Endothelial cell of umbilical vein (primary cell): ENCODE measurements at regions of chr17 and their contacts with region 1.

Region 1: GRCh38 chr17:76432712-76433336 is 20.1 kb downstream of the UBE2O start:
- DNase-seq: no peak
- H3K4me3 ChIP-seq: no peak overlapping the region
- H3K27ac ChIP-seq: no peak overlapping the region
- H3K4me1 ChIP-seq: peaks cover 9% of the 10 kb centered on the region
- H3K27me3 ChIP-seq: no peaks in the 10 kb centered on the region
- CTCF ChIP-seq: peak; percentile 22 to 54
- POLR2A ChIP-seq: no peak

Region 2: GRCh38 chr17:75738218-75738802 is 694.5 kb before region 1 on chr17:
- CTCF ChIA-PET with region 1: no interaction called
- POLR2A ChIA-PET with region 1: no interaction called
- dilution Hi-C with region 1: no loop called
- intact Hi-C with region 1: no loop called
- DNase-seq: no peak
- H3K4me3 ChIP-seq: no peak overlapping the region
- H3K27ac ChIP-seq: no peak overlapping the region
- H3K4me1 ChIP-seq: no peaks in the 10 kb centered on the region
- H3K27me3 ChIP-seq: no peaks in the 10 kb centered on the region
- CTCF ChIP-seq: no peak
- POLR2A ChIP-seq: no peak

Region 3: GRCh38 chr17:76204277-76204676 is 228.5 kb before region 1 on chr17:
- CTCF ChIA-PET with region 1: no interaction called
- POLR2A ChIA-PET with region 1: no interaction called
- dilution Hi-C with region 1: loop called (anchors 25 kb)
- intact Hi-C with region 1: no loop called
- DNase-seq: no peak
- H3K4me3 ChIP-seq: no peak overlapping the region
- H3K27ac ChIP-seq: no peak overlapping the region
- H3K4me1 ChIP-seq: no peaks in the 10 kb centered on the region
- H3K27me3 ChIP-seq: no peaks in the 10 kb centered on the region
- CTCF ChIP-seq: no peak
- POLR2A ChIP-seq: no peak

Region 4: GRCh38 chr17:76345377-76345974 is 87.3 kb before region 1 on chr17:
- CTCF ChIA-PET with region 1: no interaction called
- POLR2A ChIA-PET with region 1: no interaction called
- dilution Hi-C with region 1: no loop called
- intact Hi-C with region 1: no loop called
- DNase-seq: no peak
- H3K4me3 ChIP-seq: no peak overlapping the region
- H3K27ac ChIP-seq: no peak overlapping the region
- H3K4me1 ChIP-seq: no peaks in the 10 kb centered on the region
- H3K27me3 ChIP-seq: no peaks in the 10 kb centered on the region
- CTCF ChIP-seq: no peak
- POLR2A ChIP-seq: no peak

Region 5: GRCh38 chr17:76370261-76370993 is 62.4 kb before region 1 on chr17:
- CTCF ChIA-PET with region 1: no interaction called
- POLR2A ChIA-PET with region 1: no interaction called
- dilution Hi-C with region 1: no loop called
- intact Hi-C with region 1: no loop called
- DNase-seq: peak; percentile 92
- H3K4me3 ChIP-seq: no peak overlapping the region
- H3K27ac ChIP-seq: peak overlapping the region; percentile 97
- H3K4me1 ChIP-seq: peaks cover 28% of the 10 kb centered on the region
- H3K27me3 ChIP-seq: no peaks in the 10 kb centered on the region
- CTCF ChIP-seq: peak; percentile 56 to 62
- POLR2A ChIP-seq: no peak

Region 6: GRCh38 chr17:76388966-76389888 is 43.6 kb before region 1 on chr17:
- CTCF ChIA-PET with region 1: no interaction called
- POLR2A ChIA-PET with region 1: no interaction called
- dilution Hi-C with region 1: no loop called
- intact Hi-C with region 1: no loop called
- DNase-seq: peak; percentile 43
- H3K4me3 ChIP-seq: no peak overlapping the region
- H3K27ac ChIP-seq: no peak overlapping the region
- H3K4me1 ChIP-seq: peaks cover 17% of the 10 kb centered on the region
- H3K27me3 ChIP-seq: no peaks in the 10 kb centered on the region
- CTCF ChIP-seq: peak in 1 of 2 donors; percentile 21
- POLR2A ChIP-seq: peak; percentile 12